Caco-2 (cell line): ENCODE measurements at regions of chr2 and their contacts with region 1.

Region 1: GRCh38 chr2:10659898-10660568 is 29.7 kb downstream of the NOL10 start:
- DNase-seq: peak; percentile 67 to 76
- H3K4me3 ChIP-seq: no peak overlapping the region
- H3K4me3 Mint-ChIP-seq: no peak overlapping the region
- H3K27ac Mint-ChIP-seq: no peak overlapping the region
- H3K4me1 ChIP-seq: peaks cover 9% of the 10 kb centered on the region
- H3K4me1 Mint-ChIP-seq: peaks cover 7% of the 10 kb centered on the region
- H3K27me3 ChIP-seq: no peaks in the 10 kb centered on the region
- H3K27me3 Mint-ChIP-seq: no peaks in the 10 kb centered on the region
- CTCF ChIP-seq: peak; percentile 76 to 86

Region 2: GRCh38 chr2:10122386-10123280 is 537.4 kb before region 1 on chr2 and contains the start of gene RRM2:
- CTCF ChIA-PET with region 1: no interaction called
- POLR2A ChIA-PET with region 1: no interaction called
- intact Hi-C with region 1: loop called (anchors 10 kb)
- DNase-seq: peak; percentile 98
- H3K4me3 ChIP-seq: peak within 1 kb of the TSS; percentile 66
- H3K4me3 Mint-ChIP-seq: peak within 1 kb of the TSS; percentile 96
- H3K27ac Mint-ChIP-seq: peak within 1 kb of the TSS; percentile 96
- H3K4me1 ChIP-seq: peaks cover 11% of the 10 kb centered on the region
- H3K4me1 Mint-ChIP-seq: peaks cover 13% of the 10 kb centered on the region
- H3K27me3 ChIP-seq: no peaks in the 10 kb centered on the region
- H3K27me3 Mint-ChIP-seq: no peaks in the 10 kb centered on the region
- CTCF ChIP-seq: no peak
- total RNA-seq, gene RRM2: 160 and 169 TPM in 2 replicates

Region 3: GRCh38 chr2:10557506-10558265 is 102.3 kb before region 1 on chr2:
- CTCF ChIA-PET with region 1: interaction called, 10 read pairs
- POLR2A ChIA-PET with region 1: no interaction called
- intact Hi-C with region 1: no loop called
- DNase-seq: no peak
- H3K4me3 ChIP-seq: no peak overlapping the region
- H3K4me3 Mint-ChIP-seq: no peak overlapping the region
- H3K27ac Mint-ChIP-seq: no peak overlapping the region
- H3K4me1 ChIP-seq: no peaks in the 10 kb centered on the region
- H3K4me1 Mint-ChIP-seq: peaks cover 6% of the 10 kb centered on the region
- H3K27me3 ChIP-seq: no peaks in the 10 kb centered on the region
- H3K27me3 Mint-ChIP-seq: no peaks in the 10 kb centered on the region
- CTCF ChIP-seq: peak in 1 of 2 experiments; percentile 16

Region 4: DNA sequence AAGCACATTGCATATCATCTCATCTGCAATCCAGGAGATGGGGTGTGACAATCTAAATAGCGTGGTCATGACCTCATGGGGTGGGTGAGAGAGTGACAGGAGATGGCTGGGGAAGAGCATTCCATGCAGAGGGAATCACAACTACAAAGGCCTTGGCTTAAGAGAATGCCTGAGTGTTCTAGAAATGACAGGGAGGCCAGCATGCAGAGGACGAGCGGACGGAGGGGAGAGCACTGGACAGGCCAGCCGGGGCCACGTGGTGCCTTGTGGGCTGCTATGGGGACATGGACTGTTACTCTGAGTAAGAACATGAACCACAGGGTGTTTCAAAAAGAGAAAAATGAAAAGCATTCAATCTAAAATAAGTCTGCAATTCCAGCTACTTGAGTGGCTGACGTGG is 94.0 kb before region 1 on chr2:
- CTCF ChIA-PET with region 1: no interaction called
- POLR2A ChIA-PET with region 1: no interaction called
- intact Hi-C with region 1: loop called (anchors 5 kb)
- DNase-seq: no peak
- H3K4me3 ChIP-seq: no peak overlapping the region
- H3K4me3 Mint-ChIP-seq: no peak overlapping the region
- H3K27ac Mint-ChIP-seq: no peak overlapping the region
- H3K4me1 ChIP-seq: no peaks in the 10 kb centered on the region
- H3K4me1 Mint-ChIP-seq: no peaks in the 10 kb centered on the region
- H3K27me3 ChIP-seq: no peaks in the 10 kb centered on the region
- H3K27me3 Mint-ChIP-seq: no peaks in the 10 kb centered on the region
- CTCF ChIP-seq: no peak

Region 5: GRCh38 chr2:10584796-10585475 is 75.1 kb before region 1 on chr2:
- CTCF ChIA-PET with region 1: no interaction called
- POLR2A ChIA-PET with region 1: no interaction called
- intact Hi-C with region 1: loop called (anchors 1 kb)
- DNase-seq: peak; percentile 80 to 82
- H3K4me3 ChIP-seq: no peak overlapping the region
- H3K4me3 Mint-ChIP-seq: peak overlapping the region; percentile 52
- H3K27ac Mint-ChIP-seq: peak overlapping the region; percentile 91
- H3K4me1 ChIP-seq: peaks cover 22% of the 10 kb centered on the region
- H3K4me1 Mint-ChIP-seq: peaks cover 47% of the 10 kb centered on the region
- H3K27me3 ChIP-seq: no peaks in the 10 kb centered on the region
- H3K27me3 Mint-ChIP-seq: no peaks in the 10 kb centered on the region
- CTCF ChIP-seq: no peak

Region 6: DNA sequence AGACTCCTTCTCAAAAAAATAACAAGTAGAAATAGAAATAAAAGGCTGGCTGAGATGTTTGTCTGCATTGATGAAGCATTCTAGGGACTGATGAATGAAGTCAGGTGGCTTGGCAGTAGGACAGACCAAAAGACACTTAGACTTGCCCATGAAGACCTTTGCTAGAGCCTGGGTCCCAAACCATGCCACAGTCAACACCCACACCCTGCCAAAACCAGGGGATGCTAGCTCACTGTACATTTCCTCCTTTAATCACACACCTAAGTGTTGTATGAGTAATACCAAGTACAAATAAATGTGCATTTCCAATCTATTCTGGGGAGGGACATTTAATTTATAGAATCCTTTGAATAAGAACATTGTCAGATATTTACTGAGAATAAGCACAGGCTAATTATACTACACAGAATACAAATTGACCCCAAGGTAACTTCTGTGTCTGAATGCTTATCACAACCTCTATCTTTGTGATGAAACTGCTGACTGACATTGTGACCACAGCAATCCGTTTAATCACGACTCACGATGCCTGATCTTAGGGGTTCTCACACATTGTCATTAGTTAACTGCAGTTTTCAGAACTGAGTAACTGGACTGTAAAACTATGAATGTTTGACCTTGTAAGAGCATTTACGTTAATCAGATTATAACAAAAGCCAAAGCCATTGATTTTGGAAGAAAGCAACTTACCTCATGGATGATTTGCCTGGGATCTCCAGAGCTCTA is 40.2 kb after region 1 on chr2:
- CTCF ChIA-PET with region 1: no interaction called
- POLR2A ChIA-PET with region 1: no interaction called
- intact Hi-C with region 1: no loop called
- DNase-seq: no peak
- H3K4me3 ChIP-seq: no peak overlapping the region
- H3K4me3 Mint-ChIP-seq: no peak overlapping the region
- H3K27ac Mint-ChIP-seq: no peak overlapping the region
- H3K4me1 ChIP-seq: no peaks in the 10 kb centered on the region
- H3K4me1 Mint-ChIP-seq: no peaks in the 10 kb centered on the region
- H3K27me3 ChIP-seq: no peaks in the 10 kb centered on the region
- H3K27me3 Mint-ChIP-seq: peaks cover 3% of the 10 kb centered on the region
- CTCF ChIP-seq: no peak

Region 7: DNA sequence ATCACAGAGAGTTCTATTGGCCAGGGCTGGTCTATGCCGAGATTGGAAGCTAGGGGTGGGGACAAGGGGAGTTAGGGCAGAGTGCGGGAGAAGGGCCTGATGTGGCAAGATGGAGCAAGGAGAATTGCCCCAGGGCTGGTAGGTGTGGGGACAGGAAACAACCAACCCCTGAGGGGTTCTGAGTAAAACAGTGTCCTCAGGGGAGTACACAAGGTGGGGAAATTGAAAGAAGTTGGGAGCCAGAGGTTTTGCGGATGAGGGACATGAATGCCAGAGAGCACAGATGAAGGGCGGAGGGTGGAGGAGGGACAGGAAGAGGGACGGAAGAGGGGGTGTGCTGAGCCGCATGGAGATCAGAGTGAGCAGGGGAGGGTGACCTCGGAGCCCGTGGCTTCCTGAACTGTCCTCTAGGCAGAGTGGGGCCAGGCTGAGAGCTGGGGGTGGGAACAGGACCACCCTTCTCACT is 52.3 kb after region 1 on chr2:
- CTCF ChIA-PET with region 1: no interaction called
- POLR2A ChIA-PET with region 1: no interaction called
- intact Hi-C with region 1: no loop called
- DNase-seq: no peak
- H3K4me3 ChIP-seq: no peak overlapping the region
- H3K4me3 Mint-ChIP-seq: no peak overlapping the region
- H3K27ac Mint-ChIP-seq: no peak overlapping the region
- H3K4me1 ChIP-seq: peaks cover 8% of the 10 kb centered on the region
- H3K4me1 Mint-ChIP-seq: peaks cover 19% of the 10 kb centered on the region
- H3K27me3 ChIP-seq: no peaks in the 10 kb centered on the region
- H3K27me3 Mint-ChIP-seq: peaks cover 4% of the 10 kb centered on the region
- CTCF ChIP-seq: no peak